Lower leg skin (tissue), 4 donors: ENCODE measurements at regions of chr7 and their contacts with region 1.

Region 1: GRCh38 chr7:18693406-18693805 is 197.9 kb downstream of the HDAC9 start:
- DNase-seq: peak in 1 of 2 donors; percentile 44
- H3K4me3 ChIP-seq: no peak overlapping the region
- CTCF ChIP-seq: no peak
- POLR2A ChIP-seq: no peak

Region 2: DNA sequence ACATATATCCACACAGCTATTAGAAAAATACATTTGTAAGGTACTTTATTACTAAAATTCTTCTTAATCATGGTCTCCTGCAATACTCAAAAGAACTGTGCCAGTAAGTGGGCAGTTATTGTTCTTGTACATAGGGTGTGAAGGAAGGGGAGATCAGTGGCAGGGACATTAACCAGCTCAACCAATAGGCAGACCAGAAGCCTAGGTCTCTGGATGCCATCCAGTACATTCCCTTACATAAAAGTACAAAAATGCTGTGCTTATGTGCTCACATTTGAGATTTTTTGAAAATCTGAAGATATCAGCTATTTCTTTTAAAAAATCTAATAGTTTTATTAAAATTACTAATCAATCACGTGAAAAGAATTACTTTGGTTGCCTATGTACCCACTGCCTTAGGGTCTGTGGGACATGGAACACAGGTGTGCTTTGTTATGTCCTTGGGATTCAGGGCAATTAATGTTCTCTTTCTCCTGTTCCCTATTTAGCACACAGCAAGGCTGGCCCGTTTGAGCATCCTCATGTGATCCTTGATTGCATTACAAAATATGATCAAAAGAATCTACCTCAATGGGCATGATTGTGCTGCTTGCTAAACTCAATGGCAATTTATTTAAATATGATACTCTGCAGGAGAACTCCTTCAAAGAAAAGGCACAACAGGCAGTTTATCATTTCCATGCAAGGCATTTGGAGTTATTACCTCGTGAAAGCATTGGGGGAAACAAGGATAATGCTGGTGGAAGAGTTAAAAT is 401.4 kb after region 1 on chr7:
- intact Hi-C with region 1: loop called (anchors 5 kb)
- DNase-seq: no peak
- H3K4me3 ChIP-seq: no peak overlapping the region
- CTCF ChIP-seq: no peak
- POLR2A ChIP-seq: no peak